Psoas muscle (tissue), 8 donors: ENCODE measurements at regions of chr20 and their contacts with region 1.

Region 1: DNA sequence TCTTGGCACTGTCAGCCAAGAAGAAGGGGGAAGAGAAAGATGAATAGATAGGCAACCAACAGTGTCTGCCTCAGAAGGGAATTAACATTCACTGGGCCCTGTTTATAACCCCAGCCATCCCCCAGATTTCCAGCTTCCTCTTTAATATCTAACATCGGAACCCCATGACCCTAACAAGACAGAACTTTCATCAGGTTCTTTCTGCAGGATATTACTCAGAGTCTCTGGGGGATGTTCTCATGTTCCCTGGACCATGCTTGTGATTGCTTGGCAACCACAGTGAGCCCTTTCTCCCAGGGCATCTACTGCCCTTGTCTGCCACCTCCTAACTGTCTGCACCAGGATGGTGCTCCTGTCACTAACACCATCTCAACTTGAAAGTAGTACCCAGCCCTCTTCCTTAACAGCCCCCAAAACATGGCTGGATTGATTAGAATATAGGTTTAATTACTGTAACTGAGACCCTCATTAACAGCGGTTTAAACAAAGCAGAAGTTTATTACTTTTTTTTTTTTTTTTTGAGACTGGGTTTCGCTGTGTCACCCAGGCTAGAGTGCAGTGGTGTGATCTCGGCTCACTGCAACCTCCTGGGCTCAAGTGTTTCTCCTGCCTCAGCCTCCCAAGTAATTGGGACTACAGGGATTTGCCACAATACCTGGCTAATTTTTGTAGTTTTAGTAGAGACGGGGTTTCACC is 12.0 kb upstream of the PTPN1 start:
- DNase-seq: no peak
- ATAC-seq: no peak
- H3K4me3 ChIP-seq: no peak overlapping the region
- H3K27ac ChIP-seq: no peak overlapping the region
- H3K4me1 ChIP-seq: no peaks in the 10 kb centered on the region
- H3K27me3 ChIP-seq: no peaks in the 10 kb centered on the region
- CTCF ChIP-seq: no peak

Region 2: DNA sequence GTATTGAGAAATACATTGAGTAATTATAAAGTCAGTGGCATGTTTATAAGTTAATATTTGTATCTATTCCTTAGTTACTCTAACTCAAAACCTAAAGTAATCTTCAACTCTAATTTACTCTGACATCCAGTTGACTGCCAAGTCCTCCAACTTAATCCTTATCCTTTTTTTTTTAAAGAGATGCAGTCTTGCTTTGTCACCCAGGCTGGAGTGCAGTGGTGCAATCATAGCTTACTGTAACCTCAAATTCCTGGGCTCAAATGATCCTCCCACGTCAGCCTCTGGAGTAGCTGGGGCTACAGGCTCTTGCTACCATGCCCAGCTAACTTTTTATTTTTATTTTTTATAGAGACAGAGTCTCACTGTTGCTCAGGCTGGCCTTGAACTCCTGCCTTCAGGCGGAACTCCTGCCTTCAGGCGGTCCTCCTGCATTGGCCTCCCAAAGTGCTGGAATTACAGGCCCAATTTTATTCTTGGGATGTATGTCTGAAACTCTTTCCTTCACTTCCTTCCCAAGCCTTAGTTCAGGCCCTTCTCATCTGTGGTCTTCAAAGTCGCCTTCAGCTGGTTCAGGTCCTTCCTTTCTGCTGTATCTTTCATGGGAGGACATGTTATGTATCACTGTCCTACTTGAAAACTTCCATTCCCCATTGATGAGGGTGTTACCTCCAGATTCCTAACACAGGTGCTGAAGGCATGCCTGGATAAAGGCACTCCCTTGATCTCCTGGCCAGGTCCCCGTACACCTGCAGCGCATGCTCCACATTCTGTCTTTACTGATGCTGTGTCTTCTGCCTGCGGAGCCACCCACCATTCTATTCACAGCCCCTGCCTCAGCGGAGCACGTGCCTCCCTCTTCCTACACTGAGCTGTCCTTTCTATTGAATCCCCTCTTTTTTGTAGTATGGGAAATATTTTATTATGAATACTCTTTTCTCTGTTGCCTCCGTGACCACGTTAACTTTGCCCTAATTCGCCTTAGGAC is 36.6 kb after region 1 on chr20:
- intact Hi-C with region 1: loop called in 1 of 2 experiments (anchors 1 kb)
- DNase-seq: peak in 1 of 2 donors; percentile 30
- ATAC-seq: peak; percentile 61 to 87 (median 80)
- H3K4me3 ChIP-seq: no peak overlapping the region
- H3K27ac ChIP-seq: peak overlapping the region; percentile 38
- H3K4me1 ChIP-seq: peaks cover 58% of the 10 kb centered on the region
- H3K27me3 ChIP-seq: no peaks in the 10 kb centered on the region
- CTCF ChIP-seq: no peak